Naive thymus-derived CD4-positive, alpha-beta T cell (primary cell): ENCODE measurements at regions of chr20 and their contacts with region 1.

Region 1: GRCh38 chr20:64038565-64039292 is 2.7 kb downstream of the C20orf204 start:
- DNase-seq: peak; percentile 55 to 86 (median 76)
- ATAC-seq: peak; percentile 80
- H3K4me3 ChIP-seq: peak overlapping the region; percentile 62
- H3K4me3 Mint-ChIP-seq: peak overlapping the region; percentile 18 to 89 (median 71)
- H3K27ac ChIP-seq: peak overlapping the region; percentile 57
- H3K27ac Mint-ChIP-seq: peak overlapping the region in 4 of 9 donors; percentile 28 to 92 (median 64)
- H3K4me1 ChIP-seq: peaks cover 40 to 49% of the 10 kb centered on the region in 2 donors
- H3K4me1 Mint-ChIP-seq: peaks cover 26 to 49% (median 33%) of the 10 kb centered on the region in 7 donors
- H3K27me3 ChIP-seq: no peaks in the 10 kb centered on the region
- H3K27me3 Mint-ChIP-seq: no peaks in the 10 kb centered on the region

Region 2: GRCh38 chr20:63873477-63873971 is 165.2 kb before region 1 on chr20:
- CTCF ChIA-PET with region 1: no interaction called
- POLR2A ChIA-PET with region 1: no interaction called
- intact Hi-C with region 1: no loop called
- DNase-seq: peak in 1 of 9 donors; percentile 45
- ATAC-seq: peak; percentile 88
- H3K4me3 ChIP-seq: no peak overlapping the region
- H3K4me3 Mint-ChIP-seq: peak overlapping the region in 1 of 10 donors; percentile 35
- H3K27ac ChIP-seq: no peak overlapping the region
- H3K27ac Mint-ChIP-seq: peak overlapping the region in 1 of 9 donors; percentile 85
- H3K4me1 ChIP-seq: no peaks in the 10 kb centered on the region
- H3K4me1 Mint-ChIP-seq: peaks cover 3 to 14% (median 6%) of the 10 kb centered on the region in 7 donors
- H3K27me3 ChIP-seq: no peaks in the 10 kb centered on the region
- H3K27me3 Mint-ChIP-seq: no peaks in the 10 kb centered on the region

Region 3: GRCh38 chr20:64010711-64011237 is 28.0 kb before region 1 on chr20:
- CTCF ChIA-PET with region 1: no interaction called
- POLR2A ChIA-PET with region 1: interaction called, 6 read pairs
- intact Hi-C with region 1: loop called in 1 of 2 experiments (anchors 2 kb)
- DNase-seq: no peak
- ATAC-seq: no peak
- H3K4me3 ChIP-seq: peak overlapping the region; percentile 15
- H3K4me3 Mint-ChIP-seq: peak overlapping the region in 3 of 10 donors; percentile 45 to 68 (median 63)
- H3K27ac ChIP-seq: no peak overlapping the region
- H3K27ac Mint-ChIP-seq: peak overlapping the region in 3 of 9 donors; percentile 68 to 86 (median 84)
- H3K4me1 ChIP-seq: peaks cover 29 to 36% of the 10 kb centered on the region in 2 donors
- H3K4me1 Mint-ChIP-seq: peaks cover 16 to 52% (median 44%) of the 10 kb centered on the region in 7 donors
- H3K27me3 ChIP-seq: no peaks in the 10 kb centered on the region
- H3K27me3 Mint-ChIP-seq: no peaks in the 10 kb centered on the region

Region 4: DNA sequence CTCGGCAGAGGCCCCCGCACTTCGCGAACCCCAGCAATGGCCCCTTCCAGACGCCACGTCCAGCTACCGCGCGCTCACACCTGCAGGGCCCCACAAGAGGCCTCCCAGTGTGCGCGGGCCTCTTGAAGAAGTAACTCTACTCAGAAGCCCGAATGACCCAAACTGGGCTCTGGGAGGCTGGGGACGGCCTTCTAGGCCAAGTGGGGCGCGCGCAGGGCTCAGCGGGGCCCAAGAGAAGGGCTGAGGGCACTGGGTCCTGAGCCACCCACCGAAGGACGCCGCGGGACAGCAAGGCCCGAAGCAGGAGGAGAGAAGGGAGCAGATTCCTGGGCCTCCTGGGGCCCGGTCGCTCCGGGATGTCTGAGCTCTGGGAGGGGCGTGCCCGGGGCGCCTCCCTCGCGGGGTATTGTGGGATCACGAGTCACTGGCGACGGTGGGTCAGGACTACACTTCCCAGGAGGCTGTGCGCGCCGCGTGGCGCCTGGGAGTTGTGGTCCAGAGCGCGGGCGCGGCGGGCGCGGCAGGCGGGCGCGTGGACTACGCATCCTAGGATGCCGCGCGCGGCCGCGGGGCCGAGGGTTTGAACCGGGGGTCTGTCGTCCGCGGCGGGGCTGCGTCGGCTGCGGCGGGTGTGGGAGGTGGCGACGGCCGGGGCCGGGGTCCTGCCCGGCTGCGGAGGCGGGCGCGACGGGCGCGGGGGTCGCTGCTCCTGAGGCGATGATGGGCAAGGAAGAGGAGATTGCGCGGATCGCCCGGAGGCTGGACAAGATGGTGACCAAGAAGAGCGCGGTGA is 24.1 kb after region 1 on chr20 and contains the start of gene TCEA2:
- CTCF ChIA-PET with region 1: interaction called, 54 read pairs
- POLR2A ChIA-PET with region 1: interaction called, 23 read pairs
- intact Hi-C with region 1: loop called (anchors 1 kb)
- DNase-seq: peak; percentile 85 to 95 (median 90)
- ATAC-seq: peak; percentile 97
- H3K4me3 ChIP-seq: peak within 1 kb of the TSS; percentile 56
- H3K4me3 Mint-ChIP-seq: peak within 1 kb of the TSS; percentile 83 to 95 (median 88)
- H3K27ac ChIP-seq: peak within 1 kb of the TSS; percentile 74
- H3K27ac Mint-ChIP-seq: peak within 1 kb of the TSS; percentile 69 to 95 (median 79)
- H3K4me1 ChIP-seq: peaks cover 23 to 40% of the 10 kb centered on the region in 2 donors
- H3K4me1 Mint-ChIP-seq: peaks cover 30 to 54% (median 37%) of the 10 kb centered on the region in 7 donors
- H3K27me3 ChIP-seq: no peaks in the 10 kb centered on the region
- H3K27me3 Mint-ChIP-seq: no peaks in the 10 kb centered on the region
- total RNA-seq, gene TCEA2: 35.5 to 73.2 (median 47.3) TPM

Region 5: DNA sequence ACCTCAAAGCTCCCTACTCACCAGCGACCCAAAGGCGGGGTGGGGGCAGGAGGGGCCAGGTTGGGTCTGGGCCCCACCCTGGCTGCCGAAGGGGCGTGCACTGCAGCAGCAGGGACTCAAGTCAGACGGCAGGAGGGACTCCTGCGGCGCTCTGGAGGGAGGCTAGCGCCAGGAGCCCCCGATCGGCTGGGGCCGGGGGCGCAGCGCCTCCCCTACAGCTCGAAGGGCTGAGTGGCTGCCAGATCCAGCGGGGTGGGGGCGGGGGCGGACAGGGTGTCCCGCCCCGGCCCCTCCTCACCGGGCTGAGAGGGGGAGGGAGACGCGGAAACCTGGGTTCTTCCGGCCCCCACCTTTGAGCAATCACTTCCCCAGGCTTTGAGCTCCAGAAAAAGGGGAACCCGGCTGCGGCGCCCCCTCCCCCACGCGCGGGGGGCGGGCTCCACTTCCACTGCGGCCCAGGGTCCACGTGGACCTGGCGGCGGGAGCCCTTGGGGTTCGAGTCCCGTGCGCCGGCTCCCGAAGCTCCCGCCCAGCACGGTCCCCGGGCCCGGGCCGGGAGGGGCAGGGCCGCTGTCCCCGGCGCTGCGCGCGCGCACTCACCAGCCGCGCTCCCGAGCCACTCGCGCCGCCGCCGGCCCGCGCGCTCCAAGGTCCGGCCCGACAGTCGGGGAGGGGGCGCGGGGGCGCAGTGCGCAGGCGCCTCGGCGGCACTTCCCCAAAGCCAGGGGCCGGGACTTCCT is 40.7 kb after region 1 on chr20 and contains the start of gene RGS19:
- CTCF ChIA-PET with region 1: interaction called, 18 read pairs
- POLR2A ChIA-PET with region 1: interaction called, 26 read pairs
- intact Hi-C with region 1: loop called in 1 of 2 experiments (anchors 1 kb)
- DNase-seq: peak; percentile 59 to 86 (median 65)
- ATAC-seq: peak; percentile 63
- H3K4me3 ChIP-seq: peak within 1 kb of the TSS; percentile 89
- H3K4me3 Mint-ChIP-seq: peak within 1 kb of the TSS; percentile 81 to 98 (median 92)
- H3K27ac ChIP-seq: peak within 1 kb of the TSS; percentile 79
- H3K27ac Mint-ChIP-seq: peak within 1 kb of the TSS; percentile 78 to 94 (median 85)
- H3K4me1 ChIP-seq: peaks cover 22 to 34% of the 10 kb centered on the region in 2 donors
- H3K4me1 Mint-ChIP-seq: peaks cover 21 to 53% (median 39%) of the 10 kb centered on the region in 7 donors
- H3K27me3 ChIP-seq: no peaks in the 10 kb centered on the region
- H3K27me3 Mint-ChIP-seq: peaks cover 0 to 18% (median 0%) of the 10 kb centered on the region in 5 donors
- total RNA-seq, gene RGS19: 21.8 to 93.4 (median 23.6) TPM